K562 (cell line): ENCODE measurements at regions of chr1 and their contacts with region 1.

Region 1: DNA sequence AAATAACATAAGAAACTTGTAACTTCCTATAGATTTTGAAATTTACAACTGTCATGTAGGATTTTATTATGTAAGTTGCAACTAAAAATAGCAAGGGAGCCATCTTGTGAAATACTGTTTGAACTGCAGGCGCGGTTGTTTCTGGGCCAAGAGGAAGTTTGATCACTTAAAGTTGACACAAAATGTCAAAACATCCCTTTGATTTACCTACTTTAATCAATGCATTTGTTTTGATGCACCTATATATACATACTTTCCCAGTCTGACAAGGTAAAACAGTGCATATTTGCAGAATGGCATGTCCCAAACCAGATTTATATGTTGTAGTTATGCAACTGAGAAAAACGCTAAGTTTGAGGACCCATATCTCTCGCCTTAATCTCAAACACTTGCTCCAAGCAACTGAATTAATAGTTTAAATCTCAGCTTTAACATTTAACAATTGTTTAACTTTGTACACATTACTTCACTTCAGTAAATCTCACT is 63.8 kb downstream of the KCNK2 start:
- DNase-seq: peak in 1 of 4 experiments; percentile 3
- ATAC-seq: no peak
- H3K4me3 ChIP-seq: no peak overlapping the region
- H3K27ac ChIP-seq: no peak overlapping the region
- H3K4me1 ChIP-seq: no peaks in the 10 kb centered on the region
- H3K27me3 ChIP-seq: no peaks in the 10 kb centered on the region
- CTCF ChIP-seq: peak in 2 of 3 experiments; percentile 13 to 33; a peak in 2 of 6 replicates
- EP300 ChIP-seq: no peak
- POLR2A ChIP-seq: no peak
- RAD21 ChIP-seq: peak; percentile 25 to 26; a peak in 2 of 4 replicates

Region 2: DNA sequence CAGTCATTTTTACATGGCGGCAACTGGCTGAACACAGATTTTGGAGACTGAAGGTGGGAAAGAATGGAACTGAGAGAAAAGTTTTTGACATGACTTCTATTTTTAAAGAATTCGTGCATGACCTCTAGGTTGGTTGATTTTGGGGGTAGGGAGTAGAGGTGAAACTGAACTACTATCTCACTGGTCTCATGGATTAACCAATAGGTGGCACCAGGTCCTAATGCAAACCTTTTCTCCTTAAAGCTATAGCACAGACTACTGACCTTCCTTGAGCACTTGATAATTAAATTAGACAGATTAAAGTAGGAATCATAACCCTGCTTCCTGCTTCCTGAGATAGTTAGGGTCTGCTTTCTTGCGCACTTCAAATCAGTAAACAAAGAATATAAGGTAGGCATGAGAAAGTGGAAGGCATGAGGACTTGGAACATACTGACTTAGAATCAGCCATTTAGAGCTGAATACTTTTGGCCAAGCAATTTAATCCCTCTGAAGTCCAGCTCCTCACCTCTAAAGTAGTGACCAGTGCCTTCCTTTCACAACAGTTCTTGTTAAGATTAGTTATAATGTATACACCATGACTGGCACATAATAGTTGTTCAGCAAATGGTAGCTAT is 337.4 kb before region 1 on chr1:
- CTCF ChIA-PET with region 1: no interaction called
- POLR2A ChIA-PET with region 1: no interaction called
- in situ Hi-C with region 1: no loop called
- intact Hi-C with region 1: loop called (anchors 10 kb)
- DNase-seq: peak in 1 of 4 experiments; percentile 12
- ATAC-seq: peak; percentile 67; the same call in 1 of the 3 replicates
- H3K4me3 ChIP-seq: no peak overlapping the region
- H3K27ac ChIP-seq: no peak overlapping the region
- H3K4me1 ChIP-seq: no peaks in the 10 kb centered on the region
- H3K27me3 ChIP-seq: no peaks in the 10 kb centered on the region
- CTCF ChIP-seq: peak in 1 of 3 experiments; percentile 39; a peak in 2 of 6 replicates
- EP300 ChIP-seq: no peak
- POLR2A ChIP-seq: no peak
- RAD21 ChIP-seq: peak; percentile 26 to 39; a peak in 3 of 4 replicates

Region 3: GRCh38 chr1:215517441-215517891 is 371.1 kb after region 1 on chr1:
- CTCF ChIA-PET with region 1: no interaction called
- POLR2A ChIA-PET with region 1: no interaction called
- in situ Hi-C with region 1: no loop called
- intact Hi-C with region 1: loop called (anchors 10 kb)
- DNase-seq: no peak
- ATAC-seq: peak; percentile 29; the same call in 1 of the 3 replicates
- H3K4me3 ChIP-seq: no peak overlapping the region
- H3K27ac ChIP-seq: no peak overlapping the region
- H3K4me1 ChIP-seq: no peaks in the 10 kb centered on the region
- H3K27me3 ChIP-seq: no peaks in the 10 kb centered on the region
- CTCF ChIP-seq: no peak
- EP300 ChIP-seq: no peak
- POLR2A ChIP-seq: no peak
- RAD21 ChIP-seq: peak in 1 of 2 experiments; percentile 21; a peak in 1 of 4 replicates